ENCODE measurements at regions of chr12 and their contacts with region 1.

Region 1: GRCh38 chr12:76259660-76260389 is 88.4 kb downstream of the BBS10 start:
- DNase-seq: no peak
- ATAC-seq: peak in 1 of 2 donors; percentile 68

Region 2: DNA sequence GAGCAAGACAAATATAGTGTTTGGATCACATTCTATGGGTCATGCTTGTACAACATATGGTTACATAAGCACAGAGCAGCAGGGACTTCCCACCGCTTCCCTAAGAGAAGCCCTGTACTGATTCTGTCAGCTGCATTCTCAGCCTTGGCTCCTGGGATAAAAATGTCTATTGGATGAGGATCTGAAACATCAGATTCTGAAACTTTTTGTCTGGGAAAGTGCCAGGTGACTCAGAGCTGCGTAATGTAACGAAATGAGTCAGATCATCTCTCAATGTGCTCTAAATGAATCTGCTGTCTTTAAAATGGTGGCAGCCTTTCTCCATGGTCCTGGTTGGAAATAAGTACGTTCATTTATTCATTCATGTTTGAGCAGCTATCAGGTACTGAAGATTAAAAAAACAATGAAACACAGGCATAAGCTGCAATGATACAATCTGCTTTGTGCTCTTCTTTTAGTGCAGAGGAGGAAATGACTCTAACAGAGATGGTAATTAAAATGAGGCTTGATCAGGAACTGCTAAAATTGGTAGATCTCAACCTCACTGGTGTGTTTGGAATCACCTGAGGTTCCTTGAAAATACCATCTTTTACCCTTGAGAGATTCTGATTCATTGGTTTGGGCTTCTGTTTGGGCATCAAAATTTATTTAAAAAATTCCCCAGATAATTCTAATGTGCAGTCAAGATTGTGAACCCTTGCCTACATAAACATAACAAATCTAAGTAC is 76.2 kb before region 1 on chr12:
- intact Hi-C with region 1: loop called in 1 of 2 experiments (anchors 10 kb)
- DNase-seq: peak; percentile 56
- ATAC-seq: peak in 1 of 2 donors; percentile 88

Region 3: GRCh38 chr12:76199808-76200207 is 60.0 kb before region 1 on chr12:
- intact Hi-C with region 1: no loop called
- DNase-seq: no peak
- ATAC-seq: no peak

Measured in left cardiac atrium (tissue), 4 donors.